Psoas muscle (tissue), 8 donors: ENCODE measurements at regions of chr12 and their contacts with region 1.

Region 1: DNA sequence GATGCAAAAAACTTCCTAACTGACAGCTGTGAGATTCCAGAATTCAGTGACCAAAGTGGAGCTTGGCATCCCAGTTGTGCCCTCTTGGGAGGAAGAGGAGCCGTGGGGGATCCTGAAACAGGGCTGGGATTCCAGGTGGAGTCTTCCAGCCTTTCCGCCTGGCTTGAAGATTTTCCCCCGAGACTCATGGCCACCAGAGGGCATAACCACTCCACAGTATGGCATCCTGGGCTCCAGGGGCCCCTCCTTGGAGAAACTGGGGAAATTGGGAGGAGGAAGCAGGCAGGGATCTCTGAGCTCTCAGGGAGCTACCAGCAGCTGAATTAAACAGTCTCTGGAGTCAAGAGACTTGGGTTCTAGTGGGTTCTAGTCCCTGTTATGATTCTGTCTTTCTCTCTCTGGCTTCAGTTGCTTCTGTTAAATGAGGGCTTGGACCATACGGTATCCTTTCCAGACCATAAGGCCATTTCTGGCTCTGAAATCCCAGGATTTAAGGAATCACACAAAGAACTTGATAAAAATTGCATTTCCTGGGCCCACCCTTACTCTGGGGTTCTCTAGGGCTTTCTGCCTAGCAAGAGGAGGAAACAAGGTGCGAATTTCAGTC is 2.6 kb upstream of the TAMALIN start:
- DNase-seq: peak; percentile 47 to 68
- ATAC-seq: peak; percentile 34 to 79 (median 60)
- H3K4me3 ChIP-seq: no peak overlapping the region
- H3K27ac ChIP-seq: no peak overlapping the region
- H3K4me1 ChIP-seq: peaks cover 4% of the 10 kb centered on the region
- H3K27me3 ChIP-seq: peaks cover 0 to 24% (median 8%) of the 10 kb centered on the region in 3 donors
- CTCF ChIP-seq: peak; percentile 74

Region 2: DNA sequence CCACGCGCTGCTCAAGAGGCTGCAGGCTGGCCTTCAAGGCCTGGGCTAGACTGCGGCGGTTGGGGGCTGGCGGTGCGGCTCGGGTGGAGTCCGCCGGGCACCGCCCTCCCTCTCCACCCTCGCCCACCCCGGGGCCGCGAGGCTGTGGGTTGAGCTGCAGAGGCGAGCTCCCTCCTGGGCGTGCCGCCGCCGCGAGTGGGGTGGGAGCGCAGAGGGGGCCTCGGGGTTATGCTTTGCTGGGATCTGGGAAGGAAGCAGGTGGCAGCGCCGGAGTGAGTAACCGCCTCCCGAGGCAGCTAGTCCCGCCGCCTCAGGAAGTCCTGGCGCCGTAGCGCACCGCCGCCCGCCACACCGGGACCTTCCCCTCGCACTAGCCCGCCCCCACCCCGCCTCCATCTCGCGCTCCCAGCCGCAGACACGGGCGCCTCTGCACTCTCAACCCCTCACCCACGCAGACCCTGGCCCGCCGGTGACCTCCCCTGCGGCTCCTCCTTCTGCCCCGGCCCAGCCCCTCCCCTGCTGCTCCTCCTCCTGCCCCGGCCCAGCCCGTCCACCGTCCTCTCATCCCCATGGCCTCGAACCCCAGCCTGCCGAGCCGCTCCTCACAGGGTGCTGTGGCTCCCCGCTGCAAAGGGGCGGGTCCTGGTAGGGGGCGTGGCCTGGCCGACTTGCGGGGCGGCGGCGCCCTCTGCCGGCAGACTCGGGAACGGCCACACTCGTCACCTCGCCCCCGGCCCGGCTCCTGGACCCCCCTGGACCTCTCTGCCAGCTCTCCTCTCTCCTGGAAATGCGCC is 19.2 kb after region 1 on chr12:
- intact Hi-C with region 1: loop called in 1 of 2 experiments (anchors 1 kb)
- DNase-seq: peak; percentile 88 to 92
- ATAC-seq: peak; percentile 55 to 65 (median 64)
- H3K4me3 ChIP-seq: peak overlapping the region; percentile 61
- H3K27ac ChIP-seq: peak overlapping the region; percentile 7
- H3K4me1 ChIP-seq: peaks cover 30% of the 10 kb centered on the region
- H3K27me3 ChIP-seq: no peaks in the 10 kb centered on the region
- CTCF ChIP-seq: peak; percentile 93

Region 3: GRCh38 chr12:52121824-52122539 is 117.8 kb after region 1 on chr12:
- intact Hi-C with region 1: loop called (anchors 5 kb)
- DNase-seq: peak; percentile 59 to 82
- ATAC-seq: peak; percentile 47 to 77 (median 70)
- H3K4me3 ChIP-seq: no peak overlapping the region
- H3K27ac ChIP-seq: no peak overlapping the region
- H3K4me1 ChIP-seq: no peaks in the 10 kb centered on the region
- H3K27me3 ChIP-seq: no peaks in the 10 kb centered on the region
- CTCF ChIP-seq: peak; percentile 71

Region 4: DNA sequence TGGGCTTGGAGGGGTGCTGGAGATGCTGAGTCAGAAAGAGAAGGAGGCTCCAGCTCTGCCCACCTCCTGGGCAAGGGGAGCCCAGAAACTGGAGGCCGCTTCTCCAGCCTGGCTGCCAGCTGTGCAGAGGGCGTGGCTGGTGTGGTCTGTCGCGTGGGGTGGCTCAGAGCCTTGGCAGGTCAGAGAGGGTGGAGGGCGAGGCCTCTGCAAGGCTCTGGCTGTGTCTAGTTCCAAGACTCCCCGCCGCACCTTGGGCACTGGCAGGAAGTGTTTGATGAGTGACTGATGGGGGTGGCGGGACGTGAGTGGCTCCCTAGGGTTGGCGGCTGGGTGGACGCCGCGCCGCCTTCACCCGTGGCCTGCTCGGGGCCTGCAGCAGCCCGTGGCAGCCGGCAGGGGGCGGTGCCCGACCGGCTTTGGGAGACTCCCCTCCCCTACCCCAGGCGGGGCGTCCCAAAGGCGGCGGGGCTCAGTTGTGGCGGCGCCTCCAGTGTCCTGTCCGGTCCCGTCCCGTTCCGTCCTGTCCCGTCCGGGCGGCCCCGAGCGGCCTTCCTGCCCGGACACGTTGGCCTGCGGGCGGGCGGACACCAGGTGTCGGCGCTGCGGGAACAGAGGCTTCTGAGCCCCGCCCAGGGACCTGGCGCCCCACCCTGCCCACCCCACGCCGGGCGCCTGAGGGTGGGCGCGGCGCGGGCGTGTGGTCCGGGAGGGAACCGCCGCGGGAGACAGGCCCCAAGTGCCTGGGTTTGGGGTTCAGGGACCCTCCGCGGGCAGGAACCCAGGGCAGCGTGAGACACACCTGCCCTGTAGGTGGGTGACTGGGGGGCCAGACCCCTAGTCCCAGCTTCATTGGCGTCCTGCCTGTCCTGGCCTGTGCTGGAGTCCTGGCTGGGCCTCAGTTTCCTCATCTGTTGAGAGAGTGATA is 148.0 kb after region 1 on chr12:
- intact Hi-C with region 1: no loop called
- DNase-seq: peak; percentile 79 to 86
- ATAC-seq: peak; percentile 62 to 74 (median 66)
- H3K4me3 ChIP-seq: peak overlapping the region; percentile 53
- H3K27ac ChIP-seq: no peak overlapping the region
- H3K4me1 ChIP-seq: peaks cover 17% of the 10 kb centered on the region
- H3K27me3 ChIP-seq: no peaks in the 10 kb centered on the region
- CTCF ChIP-seq: peak; percentile 88